Activated CD4-positive, alpha-beta T cell treated with anti-CD3 and anti-CD28 coated beads for 36 hours (primary cell): ENCODE measurements at regions of chr1 and their contacts with region 1.

Region 1: DNA sequence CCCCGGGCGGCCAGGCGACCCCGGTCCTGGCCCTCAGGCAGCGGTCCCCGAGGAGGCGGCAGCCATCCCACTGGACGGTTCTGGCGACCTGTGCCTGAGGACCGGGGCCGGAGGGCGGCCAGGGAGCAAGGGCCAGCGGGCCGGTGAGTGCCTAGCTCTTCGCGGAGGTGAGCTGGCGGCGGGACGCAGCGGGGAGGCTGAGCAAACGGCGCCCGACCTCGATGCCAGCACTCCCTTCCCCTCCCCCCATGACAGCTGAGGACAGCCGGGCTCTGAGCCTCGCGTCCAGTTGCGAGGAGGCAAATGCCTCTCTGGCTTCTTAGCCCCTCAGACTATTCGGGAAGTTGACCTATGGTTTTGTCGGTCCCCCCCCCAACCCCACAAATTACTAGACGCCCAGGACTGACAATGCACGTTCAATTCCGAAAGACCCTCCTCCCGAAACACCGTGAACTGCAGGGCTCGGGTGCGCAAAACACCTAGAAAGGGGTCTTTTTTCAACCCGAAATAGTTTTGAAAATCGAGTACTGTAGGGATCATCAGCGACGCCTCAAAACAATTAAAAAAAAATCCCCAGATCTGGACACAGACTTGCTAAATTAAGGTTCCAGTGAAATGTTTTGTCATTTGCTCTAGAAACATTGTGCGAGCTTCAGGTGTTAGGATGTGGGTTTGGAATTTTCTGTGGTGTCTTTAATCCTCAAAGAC is 8.3 kb downstream of the CDKN2C start:
- DNase-seq: peak; percentile 52
- ATAC-seq: peak; percentile 56
- H3K4me3 Mint-ChIP-seq: peak overlapping the region; percentile 68
- H3K27ac Mint-ChIP-seq: peak overlapping the region; percentile 7
- H3K4me1 Mint-ChIP-seq: peaks cover 18% of the 10 kb centered on the region
- H3K27me3 Mint-ChIP-seq: peaks cover 41% of the 10 kb centered on the region

Region 2: GRCh38 chr1:50422946-50423669 is 555.2 kb before region 1 on chr1 and contains the start of gene DMRTA2:
- CTCF ChIA-PET with region 1: no interaction called
- POLR2A ChIA-PET with region 1: no interaction called
- intact Hi-C with region 1: loop called in 1 of 2 experiments (anchors 5 kb)
- DNase-seq: peak; percentile 10
- ATAC-seq: no peak
- H3K4me3 Mint-ChIP-seq: peak within 1 kb of the TSS; percentile 68
- H3K27ac Mint-ChIP-seq: no peak within 1 kb of the TSS
- H3K4me1 Mint-ChIP-seq: peaks cover 58% of the 10 kb centered on the region
- H3K27me3 Mint-ChIP-seq: peaks cover 68% of the 10 kb centered on the region
- total RNA-seq, gene DMRTA2: not detected

Region 3: GRCh38 chr1:50959913-50960844 is 18.1 kb before region 1 on chr1 and contains the start of gene FAF1:
- CTCF ChIA-PET with region 1: interaction called, 8 read pairs
- POLR2A ChIA-PET with region 1: no interaction called
- intact Hi-C with region 1: loop called in 1 of 2 experiments (anchors 1 kb)
- DNase-seq: peak; percentile 98
- ATAC-seq: peak; percentile 91
- H3K4me3 Mint-ChIP-seq: peak within 1 kb of the TSS; percentile 80
- H3K27ac Mint-ChIP-seq: peak within 1 kb of the TSS; percentile 96
- H3K4me1 Mint-ChIP-seq: peaks cover 24% of the 10 kb centered on the region
- H3K27me3 Mint-ChIP-seq: no peaks in the 10 kb centered on the region
- total RNA-seq, gene FAF1: 64.5 to 73.1 TPM